ENCODE measurements at regions of chr15 and their contacts with region 1.

Region 1: GRCh38 chr15:78811124-78811824 is at the start of gene ADAMTS7:
- DNase-seq: peak; percentile 83 to 87
- ATAC-seq: peak; percentile 87 to 96 (median 94)
- H3K4me3 ChIP-seq: peak within 1 kb of the TSS; percentile 80
- H3K27ac ChIP-seq: peak within 1 kb of the TSS; percentile 53
- H3K4me1 ChIP-seq: peaks cover 6% of the 10 kb centered on the region
- H3K27me3 ChIP-seq: peaks cover 0 to 20% (median 0%) of the 10 kb centered on the region in 3 donors
- CTCF ChIP-seq: peak; percentile 48
- total RNA-seq, gene ADAMTS7: 0.74 to 1.3 (median 0.96) TPM

Region 2: GRCh38 chr15:78761891-78762385 is 49.3 kb before region 1 on chr15:
- intact Hi-C with region 1: loop called (anchors 5 to 10 kb)
- DNase-seq: peak in 1 of 2 donors; percentile 7
- ATAC-seq: no peak
- H3K4me3 ChIP-seq: no peak overlapping the region
- H3K27ac ChIP-seq: no peak overlapping the region
- H3K4me1 ChIP-seq: peaks cover 8% of the 10 kb centered on the region
- H3K27me3 ChIP-seq: no peaks in the 10 kb centered on the region
- CTCF ChIP-seq: no peak

Region 3: DNA sequence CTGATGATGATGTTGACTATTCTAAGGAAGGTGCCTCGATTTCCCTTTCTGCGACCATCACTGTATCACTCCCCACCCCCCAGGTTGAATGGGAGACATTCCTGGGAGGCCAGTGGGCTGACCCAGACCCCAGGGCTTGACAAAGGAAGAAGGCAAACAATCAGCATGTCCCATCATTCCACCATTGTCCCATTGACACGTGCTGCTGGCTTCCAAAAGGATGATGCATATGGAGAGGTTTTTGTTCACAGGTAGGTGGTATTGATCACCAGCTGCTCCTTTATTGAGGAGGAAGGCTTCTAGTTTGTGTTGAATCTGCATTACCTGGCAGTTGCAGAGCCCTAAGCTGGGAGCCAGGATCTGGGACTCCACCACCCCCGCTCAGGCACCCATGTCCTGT is 248.9 kb after region 1 on chr15:
- intact Hi-C with region 1: no loop called
- DNase-seq: no peak
- ATAC-seq: no peak
- H3K4me3 ChIP-seq: no peak overlapping the region
- H3K27ac ChIP-seq: no peak overlapping the region
- H3K4me1 ChIP-seq: no peaks in the 10 kb centered on the region
- H3K27me3 ChIP-seq: peaks cover 0 to 5% (median 0%) of the 10 kb centered on the region in 3 donors
- CTCF ChIP-seq: no peak